ENCODE measurements at regions of chr2 and their contacts with region 1.

Region 1: GRCh38 chr2:126776692-126777619 is 121.0 kb downstream of the GYPC start:
- DNase-seq: peak; percentile 66
- ATAC-seq: peak; percentile 86
- H3K4me3 Mint-ChIP-seq: peak overlapping the region; percentile 89
- H3K27ac Mint-ChIP-seq: peak overlapping the region; percentile 35
- H3K4me1 Mint-ChIP-seq: peaks cover 12% of the 10 kb centered on the region
- H3K27me3 Mint-ChIP-seq: peaks cover 29% of the 10 kb centered on the region
- CTCF ChIP-seq: peak; percentile 94

Region 2: GRCh38 chr2:124804014-124804940 is 1972.7 kb before region 1 on chr2:
- CTCF ChIA-PET with region 1: no interaction called
- POLR2A ChIA-PET with region 1: no interaction called
- intact Hi-C with region 1: loop called (anchors 5 kb)
- DNase-seq: no peak
- ATAC-seq: no peak
- H3K4me3 Mint-ChIP-seq: no peak overlapping the region
- H3K27ac Mint-ChIP-seq: no peak overlapping the region
- H3K4me1 Mint-ChIP-seq: no peaks in the 10 kb centered on the region
- H3K27me3 Mint-ChIP-seq: no peaks in the 10 kb centered on the region
- CTCF ChIP-seq: no peak

Region 3: DNA sequence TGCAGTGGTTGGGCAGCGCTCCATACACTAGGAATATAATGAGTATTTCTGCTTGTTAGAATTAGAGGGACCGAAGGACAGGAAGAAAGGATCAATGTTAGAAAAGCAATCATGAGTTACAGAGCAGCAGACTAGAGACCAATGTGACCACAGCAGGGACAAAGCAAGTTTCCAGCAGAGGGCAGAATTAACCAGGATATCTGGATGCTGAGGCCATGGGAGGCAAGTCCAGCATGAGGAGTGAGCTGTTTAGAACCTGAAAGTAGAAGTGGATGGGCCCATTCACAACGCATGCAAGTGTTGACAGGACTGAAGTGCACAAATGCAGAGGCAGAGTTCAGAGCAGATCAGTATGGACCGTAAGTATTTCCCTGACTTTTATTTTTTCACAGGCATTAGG is 1031.4 kb before region 1 on chr2:
- CTCF ChIA-PET with region 1: no interaction called
- POLR2A ChIA-PET with region 1: no interaction called
- intact Hi-C with region 1: loop called (anchors 2 kb)
- DNase-seq: no peak
- ATAC-seq: no peak
- H3K4me3 Mint-ChIP-seq: no peak overlapping the region
- H3K27ac Mint-ChIP-seq: no peak overlapping the region
- H3K4me1 Mint-ChIP-seq: no peaks in the 10 kb centered on the region
- H3K27me3 Mint-ChIP-seq: no peaks in the 10 kb centered on the region
- CTCF ChIP-seq: no peak

Region 4: DNA sequence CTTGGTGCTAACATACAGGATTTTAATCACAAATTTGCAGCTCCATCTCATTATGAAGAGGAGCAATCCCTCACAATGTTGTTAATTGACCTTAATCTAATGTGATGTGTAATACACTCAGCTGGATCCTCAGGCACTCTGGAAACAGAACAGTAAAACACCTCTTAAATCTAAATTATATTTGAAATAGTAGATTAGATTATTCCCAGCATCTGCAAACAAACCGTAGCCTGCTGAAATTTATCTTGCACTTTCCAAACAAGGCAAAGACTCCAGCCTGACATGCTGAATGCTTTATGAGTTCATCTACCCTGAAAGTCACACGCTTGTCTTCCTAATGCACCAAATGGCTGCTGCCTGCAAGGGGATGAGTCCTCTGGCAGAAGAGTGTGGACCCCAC is 523.3 kb before region 1 on chr2:
- CTCF ChIA-PET with region 1: no interaction called
- POLR2A ChIA-PET with region 1: no interaction called
- intact Hi-C with region 1: no loop called
- DNase-seq: no peak
- ATAC-seq: no peak
- H3K4me3 Mint-ChIP-seq: no peak overlapping the region
- H3K27ac Mint-ChIP-seq: no peak overlapping the region
- H3K4me1 Mint-ChIP-seq: no peaks in the 10 kb centered on the region
- H3K27me3 Mint-ChIP-seq: no peaks in the 10 kb centered on the region
- CTCF ChIP-seq: no peak

Region 5: DNA sequence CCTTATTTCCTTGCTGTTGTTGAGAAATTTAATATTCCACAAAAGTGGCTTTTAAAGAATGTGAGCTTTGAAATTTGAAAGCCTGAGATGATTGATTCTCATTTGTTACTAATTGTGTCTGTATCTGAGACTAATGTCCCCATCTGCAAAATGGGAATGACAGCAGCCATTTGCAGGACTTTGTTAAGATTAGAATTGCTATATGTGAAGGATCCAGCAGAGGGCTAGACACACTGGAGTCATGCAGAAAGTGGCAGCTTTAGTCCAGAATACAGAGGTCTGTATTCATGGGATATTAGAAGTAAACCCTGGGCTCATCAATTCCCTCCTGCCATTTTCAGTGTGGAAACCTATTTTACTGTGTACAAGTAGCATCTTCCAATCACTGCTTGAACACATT is 417.5 kb before region 1 on chr2:
- CTCF ChIA-PET with region 1: no interaction called
- POLR2A ChIA-PET with region 1: no interaction called
- intact Hi-C with region 1: loop called (anchors 1 kb)
- DNase-seq: no peak
- ATAC-seq: peak; percentile 21
- H3K4me3 Mint-ChIP-seq: no peak overlapping the region
- H3K27ac Mint-ChIP-seq: no peak overlapping the region
- H3K4me1 Mint-ChIP-seq: no peaks in the 10 kb centered on the region
- H3K27me3 Mint-ChIP-seq: peaks cover 1% of the 10 kb centered on the region
- CTCF ChIP-seq: no peak

Region 6: GRCh38 chr2:126527836-126528507 is 249.0 kb before region 1 on chr2:
- CTCF ChIA-PET with region 1: interaction called, 122 read pairs
- POLR2A ChIA-PET with region 1: interaction called, 5 read pairs
- intact Hi-C with region 1: no loop called
- DNase-seq: peak; percentile 28
- ATAC-seq: peak; percentile 58
- H3K4me3 Mint-ChIP-seq: no peak overlapping the region
- H3K27ac Mint-ChIP-seq: no peak overlapping the region
- H3K4me1 Mint-ChIP-seq: no peaks in the 10 kb centered on the region
- H3K27me3 Mint-ChIP-seq: peaks cover 2% of the 10 kb centered on the region
- CTCF ChIP-seq: no peak

Region 7: DNA sequence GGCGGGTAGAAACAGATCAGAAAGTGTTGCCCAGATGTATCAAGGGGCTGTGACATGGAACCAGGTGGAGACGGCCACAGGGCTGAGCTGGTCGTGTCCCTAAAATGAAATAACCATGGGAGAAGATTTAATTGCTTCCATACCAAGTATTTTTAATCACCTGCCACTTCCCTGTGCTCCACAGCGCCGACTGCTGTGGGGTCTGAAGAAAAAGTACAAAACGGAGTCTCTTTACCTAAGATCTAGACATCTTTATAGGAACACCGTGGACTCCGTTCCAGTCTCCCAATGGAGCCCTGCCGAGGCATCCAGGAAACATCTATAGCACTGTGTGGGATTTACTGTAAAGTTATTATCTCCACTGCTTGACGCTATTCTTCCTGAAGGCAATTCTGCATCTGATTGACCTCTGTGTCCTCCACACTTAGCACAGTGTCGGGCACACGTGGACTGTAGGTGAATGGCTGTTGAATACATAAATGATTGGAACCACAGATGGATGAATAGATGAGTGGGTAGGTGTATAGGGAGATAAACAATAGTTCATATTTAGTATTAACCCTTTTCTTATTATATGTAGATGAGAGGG is 142.6 kb before region 1 on chr2:
- CTCF ChIA-PET with region 1: no interaction called
- POLR2A ChIA-PET with region 1: no interaction called
- intact Hi-C with region 1: loop called (anchors 5 kb)
- DNase-seq: no peak
- ATAC-seq: no peak
- H3K4me3 Mint-ChIP-seq: no peak overlapping the region
- H3K27ac Mint-ChIP-seq: no peak overlapping the region
- H3K4me1 Mint-ChIP-seq: peaks cover 16% of the 10 kb centered on the region
- H3K27me3 Mint-ChIP-seq: peaks cover 6% of the 10 kb centered on the region
- CTCF ChIP-seq: no peak

Region 8: DNA sequence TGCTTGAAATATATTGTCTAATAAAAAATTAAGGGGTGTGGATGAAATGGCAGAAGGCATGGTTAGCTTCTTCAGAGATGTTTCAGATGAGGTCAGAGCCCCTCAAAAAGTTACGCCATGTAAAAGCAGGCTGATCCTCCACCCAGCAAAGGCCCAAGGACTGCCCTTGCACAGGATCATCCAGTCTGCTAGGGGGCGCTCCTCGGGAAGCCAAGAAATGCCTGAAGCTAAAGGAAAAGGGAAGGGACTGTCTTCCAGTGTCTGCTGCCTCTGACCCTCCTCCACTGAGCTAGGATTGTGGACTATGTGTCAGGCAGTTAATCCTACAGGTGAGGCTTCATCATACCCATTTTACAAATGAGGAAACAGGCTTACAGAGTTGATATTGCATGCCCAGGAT is 87.9 kb after region 1 on chr2:
- CTCF ChIA-PET with region 1: no interaction called
- POLR2A ChIA-PET with region 1: no interaction called
- intact Hi-C with region 1: no loop called
- DNase-seq: no peak
- ATAC-seq: no peak
- H3K4me3 Mint-ChIP-seq: no peak overlapping the region
- H3K27ac Mint-ChIP-seq: no peak overlapping the region
- H3K4me1 Mint-ChIP-seq: no peaks in the 10 kb centered on the region
- H3K27me3 Mint-ChIP-seq: peaks cover 15% of the 10 kb centered on the region
- CTCF ChIP-seq: no peak

Measured in activated B cell treated with CpG ODN at 0.5 μM for 24 hours (primary cell).